ENCODE measurements at regions of chr3 and their contacts with region 1.

Region 1: GRCh38 chr3:33636125-33636850 is 81.8 kb downstream of the CLASP2 start:
- DNase-seq: peak in 1 of 3 donors; percentile 22
- ATAC-seq: peak; percentile 42
- H3K4me3 ChIP-seq: no peak overlapping the region
- H3K4me1 ChIP-seq: no peaks in the 10 kb centered on the region
- CTCF ChIP-seq: peak; percentile 39

Region 2: DNA sequence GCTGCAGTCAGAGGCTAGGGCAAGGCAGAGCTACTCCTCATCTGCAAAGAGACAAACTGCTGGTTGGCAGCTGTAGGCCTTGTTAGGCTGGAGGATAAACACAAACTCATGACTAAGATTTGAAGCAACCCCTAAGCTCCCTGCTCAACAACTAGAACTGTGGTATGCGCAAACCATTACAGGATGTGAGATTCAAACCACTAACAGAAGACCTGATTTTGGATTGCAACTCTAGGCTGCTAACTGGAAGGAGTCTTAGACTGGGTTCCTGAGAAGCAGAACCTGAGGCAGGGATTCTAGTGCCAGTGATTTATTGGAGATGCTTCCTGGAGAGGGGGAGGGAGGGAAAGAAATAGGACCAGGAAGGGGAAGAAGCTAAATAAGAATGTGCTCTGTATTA is 662.3 kb before region 1 on chr3:
- intact Hi-C with region 1: no loop called
- DNase-seq: peak in 1 of 3 donors; percentile 9
- ATAC-seq: peak; percentile 67
- H3K4me3 ChIP-seq: no peak overlapping the region
- H3K4me1 ChIP-seq: peaks cover 2% of the 10 kb centered on the region
- CTCF ChIP-seq: no peak

Region 3: DNA sequence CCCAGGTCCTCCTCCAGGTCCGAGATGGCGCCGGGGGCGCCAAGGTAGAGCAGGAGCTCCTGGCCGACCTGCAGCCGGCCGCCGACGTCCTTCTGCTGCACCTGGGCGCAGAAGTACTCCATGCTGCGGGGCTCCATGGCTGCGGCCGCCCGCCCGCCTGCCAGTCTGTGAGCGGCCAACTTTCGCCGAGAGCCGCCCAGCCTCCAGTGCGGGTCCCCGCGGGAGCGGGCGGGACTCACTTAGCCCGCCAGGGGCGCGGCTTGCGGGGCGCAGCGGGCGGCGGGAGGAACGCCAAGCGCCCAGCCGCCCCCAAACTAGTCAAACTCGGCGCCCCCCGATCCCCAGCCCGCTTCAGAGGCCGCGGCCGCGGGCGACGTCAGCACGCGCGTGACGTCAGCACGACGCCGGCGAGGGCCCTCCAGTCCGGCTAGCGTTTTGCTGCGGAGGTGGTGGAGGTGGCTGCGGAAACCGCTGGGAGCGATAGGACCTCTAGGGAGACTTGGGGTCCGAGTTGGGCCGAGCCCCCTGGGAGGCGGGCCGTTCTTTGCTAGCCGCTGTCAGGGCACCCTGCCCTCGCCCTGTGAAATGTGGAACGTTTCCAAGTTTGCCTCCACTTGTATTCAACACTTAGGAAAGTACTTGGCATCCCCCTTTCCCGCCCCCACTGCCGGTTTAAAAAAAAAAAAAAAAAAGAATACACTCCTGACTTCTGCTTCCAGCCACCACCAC is 81.7 kb after region 1 on chr3 and contains the start of gene CLASP2:
- intact Hi-C with region 1: loop called in 1 of 2 experiments (anchors 5 kb)
- DNase-seq: peak; percentile 87 to 93 (median 91)
- ATAC-seq: peak; percentile 96
- H3K4me3 ChIP-seq: peak within 1 kb of the TSS; percentile 82
- H3K4me1 ChIP-seq: peaks cover 3% of the 10 kb centered on the region
- CTCF ChIP-seq: no peak
- total RNA-seq, gene CLASP2: 33.6 to 66.6 (median 44.5) TPM

Region 4: GRCh38 chr3:33787328-33788009 is 151.2 kb after region 1 on chr3:
- intact Hi-C with region 1: loop called (anchors 5 to 10 kb)
- DNase-seq: peak in 2 of 3 donors; percentile 56 to 81
- ATAC-seq: peak; percentile 90
- H3K4me3 ChIP-seq: no peak overlapping the region
- H3K4me1 ChIP-seq: peaks cover 3% of the 10 kb centered on the region
- CTCF ChIP-seq: peak; percentile 68